H1 (cell line): ENCODE measurements at regions of chr20 and their contacts with region 1.

Region 1: GRCh38 chr20:48620519-48621254 is 207.1 kb downstream of the PREX1 start:
- DNase-seq: peak; percentile 84 to 98
- H3K4me3 ChIP-seq: peak overlapping the region in 3 of 4 experiments; percentile 28 to 59 (median 36); a peak in 4 of 8 replicates
- H3K27ac ChIP-seq: no peak overlapping the region
- H3K4me1 ChIP-seq: peaks cover 0 to 5% (median 2%) of the 10 kb centered on the region in 4 experiments; a peak in 3 of 7 replicates
- H3K27me3 ChIP-seq: no peaks in the 10 kb centered on the region
- CTCF ChIP-seq: peak; percentile 93 to 98 (median 96)
- EP300 ChIP-seq: peak in 1 of 2 experiments; percentile 17; a peak in 1 of 3 replicates
- POLR2A ChIP-seq: no peak
- RAD21 ChIP-seq: peak; percentile 99

Region 2: DNA sequence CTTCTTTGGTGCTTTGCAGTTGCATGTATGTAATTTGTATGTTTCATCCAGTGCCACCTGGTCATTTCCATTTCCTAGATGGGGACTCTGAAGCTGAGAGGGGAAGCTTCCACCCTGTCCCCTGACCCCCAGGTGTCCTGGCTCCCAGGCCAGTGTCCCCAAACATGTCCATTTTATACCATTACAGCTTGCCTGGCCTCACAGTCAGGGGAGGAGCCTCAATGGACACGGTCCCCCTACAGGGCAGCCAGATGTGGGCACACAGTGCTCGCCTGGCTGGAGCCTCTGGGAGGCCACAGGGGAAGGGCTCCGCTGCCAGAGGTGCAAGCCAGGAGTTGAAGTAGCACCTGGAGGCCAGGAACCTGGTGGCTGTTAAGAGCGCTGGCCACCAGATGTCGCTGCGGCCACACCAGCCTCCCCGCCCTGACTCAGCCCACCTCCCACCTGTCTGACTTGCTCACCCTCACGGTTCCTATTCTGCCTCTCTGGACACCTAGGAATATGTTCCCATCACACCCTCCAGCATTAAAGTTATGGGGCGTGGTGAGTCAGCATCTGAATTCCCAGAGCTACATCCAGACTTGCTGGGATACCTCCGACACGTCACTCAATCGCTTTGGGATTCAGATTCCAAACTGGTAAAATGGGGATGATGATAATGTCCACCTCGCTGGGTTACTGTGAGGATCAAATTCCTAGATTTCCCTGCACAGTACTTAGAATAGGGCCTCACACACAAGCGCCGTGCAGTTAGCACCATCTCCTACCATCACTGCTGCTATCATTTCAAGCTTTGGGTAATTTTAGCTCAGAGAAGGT is 942.8 kb before region 1 on chr20:
- CTCF ChIA-PET with region 1: interaction called, 11 read pairs
- POLR2A ChIA-PET with region 1: interaction called, 3 read pairs
- DNase-seq: peak; percentile 59 to 89
- H3K4me3 ChIP-seq: no peak overlapping the region
- H3K27ac ChIP-seq: no peak overlapping the region
- H3K4me1 ChIP-seq: peaks cover 0 to 7% (median 2%) of the 10 kb centered on the region in 4 experiments; a peak in 5 of 7 replicates
- H3K27me3 ChIP-seq: no peaks in the 10 kb centered on the region
- CTCF ChIP-seq: peak; percentile 93 to 97 (median 95)
- EP300 ChIP-seq: no peak
- POLR2A ChIP-seq: no peak
- RAD21 ChIP-seq: peak; percentile 94 to 96

Region 3: GRCh38 chr20:48295445-48295963 is 325.2 kb before region 1 on chr20:
- CTCF ChIA-PET with region 1: interaction called, 20 read pairs
- POLR2A ChIA-PET with region 1: no interaction called
- DNase-seq: peak in 1 of 2 experiments; percentile 80
- H3K4me3 ChIP-seq: no peak overlapping the region
- H3K27ac ChIP-seq: peak overlapping the region; percentile 52
- H3K4me1 ChIP-seq: peaks cover 6 to 23% (median 11%) of the 10 kb centered on the region in 4 experiments
- H3K27me3 ChIP-seq: no peaks in the 10 kb centered on the region
- CTCF ChIP-seq: peak in 2 of 3 experiments; percentile 48 to 57; a peak in 2 of 4 replicates
- EP300 ChIP-seq: peak in 1 of 2 experiments; percentile 25; a peak in 1 of 3 replicates
- POLR2A ChIP-seq: no peak
- RAD21 ChIP-seq: peak; percentile 84 to 89

Region 4: GRCh38 chr20:48374991-48375595 is 245.6 kb before region 1 on chr20:
- CTCF ChIA-PET with region 1: interaction called, 14 read pairs
- POLR2A ChIA-PET with region 1: no interaction called
- DNase-seq: no peak
- H3K4me3 ChIP-seq: no peak overlapping the region
- H3K27ac ChIP-seq: no peak overlapping the region
- H3K4me1 ChIP-seq: peaks cover 5 to 20% (median 12%) of the 10 kb centered on the region in 4 experiments
- H3K27me3 ChIP-seq: no peaks in the 10 kb centered on the region; a peak in 3 of 7 replicates
- CTCF ChIP-seq: no peak
- EP300 ChIP-seq: no peak
- POLR2A ChIP-seq: no peak
- RAD21 ChIP-seq: no peak

Region 5: GRCh38 chr20:48471759-48472533 is 148.7 kb before region 1 on chr20:
- CTCF ChIA-PET with region 1: interaction called, 27 read pairs
- POLR2A ChIA-PET with region 1: no interaction called
- DNase-seq: no peak
- H3K4me3 ChIP-seq: no peak overlapping the region
- H3K27ac ChIP-seq: no peak overlapping the region
- H3K4me1 ChIP-seq: no peaks in the 10 kb centered on the region
- H3K27me3 ChIP-seq: no peaks in the 10 kb centered on the region; a peak in 1 of 7 replicates
- CTCF ChIP-seq: no peak
- EP300 ChIP-seq: no peak
- POLR2A ChIP-seq: no peak
- RAD21 ChIP-seq: no peak

Region 6: GRCh38 chr20:48574393-48574792 is 46.3 kb before region 1 on chr20:
- CTCF ChIA-PET with region 1: interaction called, 18 read pairs
- POLR2A ChIA-PET with region 1: no interaction called
- DNase-seq: no peak
- H3K4me3 ChIP-seq: no peak overlapping the region
- H3K27ac ChIP-seq: no peak overlapping the region
- H3K4me1 ChIP-seq: no peaks in the 10 kb centered on the region
- H3K27me3 ChIP-seq: no peaks in the 10 kb centered on the region
- CTCF ChIP-seq: no peak
- EP300 ChIP-seq: no peak
- POLR2A ChIP-seq: no peak
- RAD21 ChIP-seq: peak; percentile 21 to 32; a peak in 3 of 4 replicates

Region 7: GRCh38 chr20:48635433-48636310 is 15.0 kb after region 1 on chr20:
- CTCF ChIA-PET with region 1: interaction called, 15 read pairs
- POLR2A ChIA-PET with region 1: no interaction called
- DNase-seq: peak; percentile 41 to 84
- H3K4me3 ChIP-seq: no peak overlapping the region
- H3K27ac ChIP-seq: no peak overlapping the region
- H3K4me1 ChIP-seq: peaks cover 0 to 3% (median 2%) of the 10 kb centered on the region in 4 experiments; a peak in 5 of 7 replicates
- H3K27me3 ChIP-seq: no peaks in the 10 kb centered on the region
- CTCF ChIP-seq: peak; percentile 84 to 96 (median 94)
- EP300 ChIP-seq: no peak
- POLR2A ChIP-seq: no peak
- RAD21 ChIP-seq: peak; percentile 93 to 95